GM12878 (cell line): ENCODE measurements at regions of chr16 and their contacts with region 1.

Region 1: GRCh38 chr16:67719048-67719777 is at the start of gene GFOD2:
- DNase-seq: peak; percentile 79
- ATAC-seq: peak; percentile 92
- H3K4me3 ChIP-seq: peak within 1 kb of the TSS; percentile 82
- H3K27ac ChIP-seq: peak within 1 kb of the TSS; percentile 95
- H3K4me1 ChIP-seq: peaks cover 11% of the 10 kb centered on the region
- H3K27me3 ChIP-seq: no peaks in the 10 kb centered on the region
- CTCF ChIP-seq: no peak
- EP300 ChIP-seq: no peak
- POLR2A ChIP-seq: peak; percentile 95
- RAD21 ChIP-seq: no peak
- polyA plus RNA-seq, gene GFOD2: 2.0 to 2.2 TPM

Region 2: GRCh38 chr16:67773569-67774456 is 54.6 kb after region 1 on chr16:
- CTCF ChIA-PET with region 1: no interaction called
- POLR2A ChIA-PET with region 1: no interaction called
- RAD21 ChIA-PET with region 1: no interaction called
- SMC1A ChIA-PET with region 1: no interaction called
- in situ Hi-C with region 1: no loop called
- intact Hi-C with region 1: no loop called
- DNase-seq: no peak
- ATAC-seq: no peak
- H3K4me3 ChIP-seq: no peak overlapping the region
- H3K27ac ChIP-seq: no peak overlapping the region
- H3K4me1 ChIP-seq: no peaks in the 10 kb centered on the region
- H3K27me3 ChIP-seq: no peaks in the 10 kb centered on the region
- CTCF ChIP-seq: no peak
- EP300 ChIP-seq: no peak
- POLR2A ChIP-seq: no peak
- RAD21 ChIP-seq: no peak

Region 3: DNA sequence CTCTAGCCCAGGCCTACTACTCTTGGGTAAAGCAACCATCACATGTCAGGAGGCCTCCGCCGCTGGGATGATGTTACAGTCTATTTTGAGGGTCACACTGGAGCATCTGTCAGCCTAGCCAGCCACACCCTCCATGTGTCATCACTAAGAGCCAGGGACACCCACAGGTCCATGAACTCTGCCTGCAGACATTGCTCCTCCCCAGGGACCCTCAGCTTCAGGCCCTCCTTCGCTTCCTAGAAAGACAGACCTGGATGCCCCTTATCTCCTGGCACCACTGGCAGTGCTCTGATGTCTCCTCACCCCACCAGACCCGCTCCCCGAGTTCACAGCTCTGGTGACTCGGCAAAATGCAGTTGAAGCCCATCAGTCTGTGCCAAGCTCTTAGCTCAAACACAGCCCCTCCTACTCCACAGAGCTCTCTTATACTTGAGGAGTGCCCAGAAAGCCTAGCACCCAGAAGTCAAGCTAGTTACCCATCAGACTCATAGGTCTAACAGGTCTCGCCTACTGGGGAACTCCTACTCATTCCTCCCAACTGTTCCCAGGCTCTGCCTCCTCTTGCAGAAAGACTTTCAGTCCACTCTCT is 81.2 kb after region 1 on chr16:
- CTCF ChIA-PET with region 1: interaction called, 5 read pairs
- POLR2A ChIA-PET with region 1: interaction called, 10 read pairs
- RAD21 ChIA-PET with region 1: interaction called, 12 read pairs
- SMC1A ChIA-PET with region 1: interaction called, 3 read pairs
- in situ Hi-C with region 1: no loop called
- intact Hi-C with region 1: no loop called
- DNase-seq: no peak
- ATAC-seq: no peak
- H3K4me3 ChIP-seq: no peak overlapping the region
- H3K27ac ChIP-seq: no peak overlapping the region
- H3K4me1 ChIP-seq: peaks cover 26% of the 10 kb centered on the region
- H3K27me3 ChIP-seq: no peaks in the 10 kb centered on the region
- CTCF ChIP-seq: no peak
- EP300 ChIP-seq: no peak
- POLR2A ChIP-seq: no peak
- RAD21 ChIP-seq: no peak

Region 4: DNA sequence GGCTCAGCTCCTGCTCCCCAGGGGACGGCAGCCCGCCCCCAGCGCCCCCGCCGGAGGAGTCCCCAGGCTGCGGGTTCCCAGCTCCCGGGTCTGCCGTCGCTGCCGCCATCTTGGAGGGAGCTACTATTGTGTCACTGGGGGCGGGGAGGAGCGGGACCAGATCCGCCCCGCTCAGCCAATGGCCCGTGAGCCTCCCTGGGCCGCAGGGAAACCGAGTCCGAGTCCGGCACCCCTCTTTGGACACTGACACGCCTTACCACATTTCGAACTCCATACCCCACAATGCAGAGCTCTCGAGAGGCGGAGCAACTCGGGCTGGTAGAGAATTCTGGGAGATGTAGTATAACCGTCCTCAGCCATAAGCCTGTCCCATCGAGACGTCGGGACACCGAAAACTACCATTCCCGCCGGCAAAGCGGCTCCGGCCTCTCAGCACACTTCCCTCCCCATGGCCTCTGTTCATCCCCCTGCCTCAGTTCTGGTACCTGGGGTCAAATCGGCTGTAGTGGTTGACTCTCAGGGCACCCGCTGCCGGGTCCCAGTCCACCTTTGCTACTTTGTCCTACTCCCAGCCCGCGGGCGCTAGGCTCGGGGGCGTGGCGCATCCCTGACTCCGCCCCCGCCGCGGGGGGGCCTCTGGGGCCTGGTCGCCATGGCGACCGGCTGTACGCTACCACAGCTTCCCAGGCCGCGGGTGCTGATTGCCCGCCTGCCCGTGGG is 87.4 kb after region 1 on chr16 and contains the starts of genes RANBP10 and TSNAXIP1:
- CTCF ChIA-PET with region 1: interaction called, 5 read pairs
- POLR2A ChIA-PET with region 1: interaction called, 10 read pairs
- RAD21 ChIA-PET with region 1: interaction called, 17 read pairs
- SMC1A ChIA-PET with region 1: interaction called, 5 read pairs
- in situ Hi-C with region 1: no loop called
- intact Hi-C with region 1: loop called (anchors 2 kb)
- DNase-seq: peak; percentile 99
- ATAC-seq: peak; percentile 93
- H3K4me3 ChIP-seq: peak within 1 kb of the TSS; percentile 94
- H3K27ac ChIP-seq: peak within 1 kb of the TSS; percentile 75
- H3K4me1 ChIP-seq: peaks cover 22% of the 10 kb centered on the region
- H3K27me3 ChIP-seq: no peaks in the 10 kb centered on the region
- CTCF ChIP-seq: no peak
- EP300 ChIP-seq: no peak
- POLR2A ChIP-seq: peak; percentile 92
- RAD21 ChIP-seq: no peak
- polyA plus RNA-seq, gene RANBP10: 1.2 to 2.0 TPM
- polyA plus RNA-seq, gene TSNAXIP1: 0.09 TPM in 1 of 2 experiments, not detected in the other

Region 5: DNA sequence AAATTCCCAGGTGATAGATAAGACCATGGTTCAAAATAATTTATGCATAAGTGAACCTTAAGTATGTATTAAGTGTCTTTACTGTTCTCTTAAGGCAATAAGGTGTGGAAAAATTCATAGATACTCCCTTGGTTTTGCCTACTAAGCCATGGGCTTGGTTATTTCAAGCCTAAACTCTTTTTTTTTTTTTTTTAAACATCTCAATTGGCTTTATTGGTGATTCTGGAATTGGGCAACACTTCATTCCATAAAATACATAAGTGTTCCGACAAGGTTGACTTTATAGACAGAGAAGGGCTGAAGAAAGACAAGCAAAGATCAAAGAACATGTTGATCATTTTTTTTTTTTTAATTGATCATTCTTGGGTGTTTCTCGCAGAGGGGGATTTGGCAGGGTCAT is 443.2 kb after region 1 on chr16:
- CTCF ChIA-PET with region 1: no interaction called
- POLR2A ChIA-PET with region 1: no interaction called
- RAD21 ChIA-PET with region 1: no interaction called
- SMC1A ChIA-PET with region 1: no interaction called
- in situ Hi-C with region 1: no loop called
- intact Hi-C with region 1: no loop called
- DNase-seq: no peak
- ATAC-seq: no peak
- H3K4me3 ChIP-seq: no peak overlapping the region
- H3K27ac ChIP-seq: no peak overlapping the region
- H3K4me1 ChIP-seq: no peaks in the 10 kb centered on the region
- H3K27me3 ChIP-seq: no peaks in the 10 kb centered on the region
- CTCF ChIP-seq: no peak
- EP300 ChIP-seq: no peak
- POLR2A ChIP-seq: no peak
- RAD21 ChIP-seq: no peak